Heart left ventricle (tissue), 16 donors: ENCODE measurements at regions of chr7 and their contacts with region 1.

Region 1: GRCh38 chr7:27739909-27740448 is at the start of gene TAX1BP1:
- DNase-seq: peak; percentile 96 to 98 (median 97)
- ATAC-seq: peak; percentile 100
- H3K4me3 ChIP-seq: peak within 1 kb of the TSS; percentile 75 to 99 (median 91)
- H3K27ac ChIP-seq: peak within 1 kb of the TSS; percentile 86 to 99 (median 96)
- H3K4me1 ChIP-seq: peaks cover 0 to 38% (median 22%) of the 10 kb centered on the region in 12 donors
- H3K27me3 ChIP-seq: no peaks in the 10 kb centered on the region
- CTCF ChIP-seq: no peak
- POLR2A ChIP-seq: peak; percentile 54 to 94
- total RNA-seq, gene TAX1BP1: 128 to 190 (median 173) TPM

Region 2: GRCh38 chr7:27662490-27663205 is 77.3 kb before region 1 on chr7 and contains the start of gene HIBADH:
- intact Hi-C with region 1: loop called (anchors 1 to 5 kb)
- DNase-seq: peak; percentile 99
- ATAC-seq: peak; percentile 99
- H3K4me3 ChIP-seq: peak within 1 kb of the TSS; percentile 57 to 97 (median 80)
- H3K27ac ChIP-seq: peak within 1 kb of the TSS; percentile 85 to 98 (median 91)
- H3K4me1 ChIP-seq: peaks cover 0 to 23% (median 6%) of the 10 kb centered on the region in 12 donors
- H3K27me3 ChIP-seq: no peaks in the 10 kb centered on the region
- CTCF ChIP-seq: peak in 8 of 12 donors; percentile 11 to 48 (median 22)
- POLR2A ChIP-seq: peak in 1 of 2 donors; percentile 96
- total RNA-seq, gene HIBADH: 48.5 to 107 (median 69.7) TPM